ENCODE measurements at regions of chr6 and their contacts with region 1.

Region 1: GRCh38 chr6:43667245-43668150 is 20.1 kb downstream of the MRPS18A start:
- DNase-seq: peak; percentile 84 to 91
- ATAC-seq: peak; percentile 61 to 77 (median 72)
- H3K4me3 ChIP-seq: peak overlapping the region; percentile 38
- H3K27ac ChIP-seq: peak overlapping the region; percentile 83
- H3K4me1 ChIP-seq: peaks cover 54% of the 10 kb centered on the region
- H3K27me3 ChIP-seq: no peaks in the 10 kb centered on the region
- CTCF ChIP-seq: peak; percentile 96

Region 2: DNA sequence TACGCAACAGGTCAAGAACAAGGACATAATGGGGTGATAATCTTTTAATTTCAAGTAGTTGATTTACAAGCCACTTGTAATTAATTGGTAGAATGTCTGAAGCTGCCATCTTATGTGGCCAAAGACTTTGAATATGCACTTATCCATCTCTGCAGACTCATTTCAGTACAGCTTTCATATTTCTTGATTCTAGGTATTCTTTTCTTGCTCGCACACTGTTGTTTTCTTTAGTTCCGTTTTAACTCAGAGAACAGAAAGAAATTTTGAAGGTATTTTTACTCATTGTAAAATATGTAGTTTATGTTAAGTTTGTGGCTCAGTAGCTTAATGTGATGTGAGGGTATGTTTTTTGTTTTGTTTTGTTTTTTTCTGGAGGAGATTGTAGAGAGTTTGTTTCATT is 1029.8 kb before region 1 on chr6:
- intact Hi-C with region 1: no loop called
- DNase-seq: no peak
- ATAC-seq: no peak
- H3K4me3 ChIP-seq: no peak overlapping the region
- H3K27ac ChIP-seq: no peak overlapping the region
- H3K4me1 ChIP-seq: no peaks in the 10 kb centered on the region
- H3K27me3 ChIP-seq: no peaks in the 10 kb centered on the region
- CTCF ChIP-seq: no peak

Region 3: DNA sequence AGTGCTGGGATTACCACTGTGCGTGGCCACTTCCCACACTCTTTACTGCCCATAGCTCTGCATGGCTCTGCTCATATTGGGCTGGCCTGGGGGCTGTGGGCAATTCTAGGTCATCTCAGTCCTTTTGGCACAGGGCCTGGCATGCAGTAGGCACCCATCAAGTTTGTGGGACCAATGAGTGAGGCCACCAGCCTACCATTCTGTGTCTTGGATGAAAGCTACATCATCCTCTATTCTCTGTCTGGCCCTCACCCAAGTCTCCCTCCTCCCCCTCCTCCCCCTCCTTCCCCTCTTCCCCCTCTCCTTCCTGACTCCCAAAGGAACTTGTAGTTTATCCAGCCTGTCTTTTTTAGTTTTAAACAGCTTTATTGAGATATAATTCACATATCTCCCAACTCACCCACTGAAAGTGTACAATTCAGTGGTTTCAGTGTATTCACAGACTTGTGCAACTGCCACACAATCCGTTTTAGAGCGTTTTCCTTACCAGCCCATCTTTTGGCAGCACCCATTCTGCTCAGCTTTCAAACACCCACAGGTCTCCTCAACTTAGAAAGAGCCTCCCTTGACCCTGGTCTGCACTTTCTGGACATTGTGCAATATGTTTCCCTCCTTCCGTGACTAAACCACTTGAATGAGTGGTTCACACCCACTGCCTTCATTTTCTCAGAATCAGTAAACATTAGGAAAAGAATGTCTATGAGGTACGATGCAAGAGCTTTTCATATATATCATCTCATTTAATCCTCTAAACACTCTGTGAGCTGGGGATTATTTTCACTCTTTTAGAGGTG is 41.6 kb after region 1 on chr6:
- intact Hi-C with region 1: loop called in 1 of 2 experiments (anchors 5 kb)
- DNase-seq: no peak
- ATAC-seq: peak; percentile 42 to 77 (median 64)
- H3K4me3 ChIP-seq: no peak overlapping the region
- H3K27ac ChIP-seq: peak overlapping the region; percentile 32
- H3K4me1 ChIP-seq: no peaks in the 10 kb centered on the region
- H3K27me3 ChIP-seq: no peaks in the 10 kb centered on the region
- CTCF ChIP-seq: no peak

Region 4: DNA sequence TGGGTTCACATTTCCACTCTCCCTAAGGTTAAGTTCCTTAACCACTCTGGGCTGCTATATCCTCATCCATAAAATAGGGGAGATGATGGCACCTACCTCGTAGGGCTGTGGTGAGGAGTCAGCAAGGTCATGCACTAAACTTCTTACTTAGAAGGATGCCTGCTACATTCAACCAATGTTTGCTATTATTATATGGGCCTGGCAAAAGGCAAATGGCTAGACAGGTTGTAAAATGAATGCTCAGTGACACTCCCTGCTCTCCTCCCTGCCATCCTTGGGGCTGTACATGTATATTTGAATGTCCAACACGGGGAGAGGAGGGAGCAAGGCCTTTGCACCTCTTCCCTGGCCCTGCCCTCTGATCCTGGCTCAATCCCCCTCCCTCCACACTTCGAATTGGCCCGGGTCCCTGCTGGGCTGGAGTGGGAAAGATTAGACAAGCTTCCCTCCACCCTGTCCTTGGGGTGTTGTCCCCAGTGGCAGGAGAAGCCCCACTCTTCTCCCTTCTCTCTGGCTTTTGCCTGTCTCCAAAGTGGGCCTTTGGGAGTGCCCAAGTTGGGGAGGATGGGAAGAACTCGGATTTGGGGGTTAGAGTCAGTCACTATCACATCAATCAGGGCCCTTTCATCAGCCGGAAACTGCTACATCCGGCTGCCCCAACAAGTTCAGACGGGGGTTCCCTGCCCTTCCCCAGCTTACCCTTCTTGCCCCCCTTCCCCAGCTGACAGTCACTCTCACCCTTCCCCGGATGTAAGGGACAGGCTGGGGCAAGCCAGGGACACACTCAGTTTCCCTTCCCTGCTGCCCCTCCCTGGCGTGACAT is 66.2 kb after region 1 on chr6:
- intact Hi-C with region 1: no loop called
- DNase-seq: no peak
- ATAC-seq: no peak
- H3K4me3 ChIP-seq: no peak overlapping the region
- H3K27ac ChIP-seq: no peak overlapping the region
- H3K4me1 ChIP-seq: no peaks in the 10 kb centered on the region
- H3K27me3 ChIP-seq: no peaks in the 10 kb centered on the region
- CTCF ChIP-seq: no peak

Region 5: DNA sequence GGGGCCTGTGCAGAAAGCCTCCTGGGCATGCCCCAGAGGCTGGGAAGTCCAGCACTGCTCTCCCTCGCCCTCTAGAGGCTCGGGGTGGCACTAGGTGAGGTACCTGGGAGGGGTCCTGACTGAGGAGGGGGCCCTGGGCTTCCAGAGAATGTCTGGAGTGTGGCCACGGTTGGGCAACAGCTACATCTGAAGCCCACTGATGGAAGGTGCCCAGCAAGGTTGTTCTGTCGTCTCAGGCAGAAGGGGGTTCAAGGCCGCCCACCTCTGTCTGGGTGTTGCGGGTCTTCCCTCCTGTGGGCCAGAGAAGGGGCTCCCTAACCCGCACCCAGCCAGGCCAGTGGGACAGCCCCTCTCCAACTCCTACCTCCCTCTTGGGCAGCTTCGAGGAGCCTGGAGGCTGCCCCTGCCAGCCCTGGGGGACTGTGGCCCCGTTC is 91.1 kb after region 1 on chr6:
- intact Hi-C with region 1: loop called (anchors 1 to 2 kb)
- DNase-seq: peak in 1 of 2 donors; percentile 66
- ATAC-seq: peak; percentile 78 to 93 (median 86)
- H3K4me3 ChIP-seq: no peak overlapping the region
- H3K27ac ChIP-seq: no peak overlapping the region
- H3K4me1 ChIP-seq: no peaks in the 10 kb centered on the region
- H3K27me3 ChIP-seq: no peaks in the 10 kb centered on the region
- CTCF ChIP-seq: peak; percentile 78

Region 6: DNA sequence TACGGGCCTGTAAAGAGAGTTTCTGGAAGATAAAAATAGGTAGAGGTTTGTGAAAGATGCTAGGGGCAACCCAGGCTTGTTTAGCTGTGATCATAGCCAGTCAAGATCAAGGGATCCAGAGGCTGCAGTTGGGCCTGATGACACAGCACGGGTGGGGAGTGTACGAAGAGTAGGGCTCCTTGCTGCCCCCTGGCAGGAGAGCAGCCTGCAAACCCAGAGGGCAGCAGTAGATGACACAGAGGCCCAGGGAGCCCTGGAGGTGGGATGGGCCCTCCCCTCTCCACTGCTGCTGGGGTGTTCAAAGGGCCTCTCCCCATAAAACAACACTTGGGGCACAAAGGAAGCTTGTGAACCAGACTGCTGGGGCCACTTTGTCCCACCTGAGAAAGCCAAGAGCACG is 149.7 kb after region 1 on chr6:
- intact Hi-C with region 1: loop called in 1 of 2 experiments (anchors 5 kb)
- DNase-seq: peak; percentile 65 to 82
- ATAC-seq: peak; percentile 89 to 95 (median 94)
- H3K4me3 ChIP-seq: no peak overlapping the region
- H3K27ac ChIP-seq: no peak overlapping the region
- H3K4me1 ChIP-seq: peaks cover 9% of the 10 kb centered on the region
- H3K27me3 ChIP-seq: no peaks in the 10 kb centered on the region
- CTCF ChIP-seq: peak; percentile 47

Region 7: GRCh38 chr6:43951063-43951755 is 283.7 kb after region 1 on chr6:
- intact Hi-C with region 1: loop called in 1 of 2 experiments (anchors 10 kb)
- DNase-seq: peak; percentile 61 to 76
- ATAC-seq: peak; percentile 16 to 31 (median 25)
- H3K4me3 ChIP-seq: no peak overlapping the region
- H3K27ac ChIP-seq: peak overlapping the region; percentile 86
- H3K4me1 ChIP-seq: peaks cover 21% of the 10 kb centered on the region
- H3K27me3 ChIP-seq: no peaks in the 10 kb centered on the region
- CTCF ChIP-seq: peak; percentile 45

Region 8: GRCh38 chr6:44080561-44081521 is 413.3 kb after region 1 on chr6:
- intact Hi-C with region 1: loop called (anchors 1 to 2 kb)
- DNase-seq: peak in 1 of 2 donors; percentile 35
- ATAC-seq: no peak
- H3K4me3 ChIP-seq: no peak overlapping the region
- H3K27ac ChIP-seq: no peak overlapping the region
- H3K4me1 ChIP-seq: peaks cover 24% of the 10 kb centered on the region
- H3K27me3 ChIP-seq: no peaks in the 10 kb centered on the region
- CTCF ChIP-seq: no peak

Region 9: DNA sequence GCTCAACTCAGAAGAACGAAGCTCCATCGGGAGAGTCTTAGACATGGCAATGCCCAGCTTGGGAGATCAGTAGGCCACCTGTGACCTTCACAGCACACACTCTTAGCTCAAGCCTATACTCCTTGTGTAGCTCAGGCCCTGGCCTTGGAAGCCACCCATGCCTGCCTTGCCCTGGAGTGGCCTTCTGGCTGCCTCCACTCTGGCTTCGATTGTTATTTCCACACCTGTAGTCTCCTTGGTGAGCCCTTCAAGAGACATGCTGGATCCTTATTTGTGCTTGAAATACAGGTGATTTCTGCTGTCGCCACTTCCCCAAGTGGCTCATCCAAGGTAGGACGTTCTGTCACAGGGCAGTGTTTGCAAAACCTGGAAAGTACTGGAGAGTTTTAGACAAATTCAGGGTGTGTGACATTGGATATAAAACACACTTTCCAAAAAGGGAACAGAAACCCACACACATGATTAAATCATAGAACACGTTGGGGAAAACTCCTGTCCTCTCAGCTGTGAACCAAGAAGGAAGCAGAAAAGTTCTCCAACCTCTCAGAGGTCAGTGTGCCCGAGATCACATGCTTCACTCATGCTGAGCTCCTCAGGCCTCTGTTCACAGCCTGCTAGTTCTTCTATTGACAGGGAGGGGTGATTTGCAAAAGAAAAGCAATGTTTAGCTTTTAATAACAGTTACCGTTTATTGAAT is 1111.8 kb after region 1 on chr6:
- intact Hi-C with region 1: no loop called
- DNase-seq: no peak
- ATAC-seq: no peak
- H3K4me3 ChIP-seq: no peak overlapping the region
- H3K27ac ChIP-seq: no peak overlapping the region
- H3K4me1 ChIP-seq: no peaks in the 10 kb centered on the region
- H3K27me3 ChIP-seq: no peaks in the 10 kb centered on the region
- CTCF ChIP-seq: no peak

Measured in psoas muscle (tissue), 8 donors.